A549 (cell line): ENCODE measurements at regions of chr3 and their contacts with region 1.

Region 1: GRCh38 chr3:159884661-159885402 is 103.8 kb upstream of the IL12A start:
- DNase-seq: peak; percentile 44 to 49
- ATAC-seq: peak; percentile 77 to 82; a peak in 4 of 6 replicates
- H3K4me3 ChIP-seq: no peak overlapping the region
- H3K27ac ChIP-seq: peak overlapping the region; percentile 2 to 40; a peak in 4 of 6 replicates
- H3K4me1 ChIP-seq: no peaks in the 10 kb centered on the region
- CTCF ChIP-seq: peak; percentile 80
- EP300 ChIP-seq: no peak
- POLR2A ChIP-seq: no peak
- RAD21 ChIP-seq: peak; percentile 71 to 86

Region 2: DNA sequence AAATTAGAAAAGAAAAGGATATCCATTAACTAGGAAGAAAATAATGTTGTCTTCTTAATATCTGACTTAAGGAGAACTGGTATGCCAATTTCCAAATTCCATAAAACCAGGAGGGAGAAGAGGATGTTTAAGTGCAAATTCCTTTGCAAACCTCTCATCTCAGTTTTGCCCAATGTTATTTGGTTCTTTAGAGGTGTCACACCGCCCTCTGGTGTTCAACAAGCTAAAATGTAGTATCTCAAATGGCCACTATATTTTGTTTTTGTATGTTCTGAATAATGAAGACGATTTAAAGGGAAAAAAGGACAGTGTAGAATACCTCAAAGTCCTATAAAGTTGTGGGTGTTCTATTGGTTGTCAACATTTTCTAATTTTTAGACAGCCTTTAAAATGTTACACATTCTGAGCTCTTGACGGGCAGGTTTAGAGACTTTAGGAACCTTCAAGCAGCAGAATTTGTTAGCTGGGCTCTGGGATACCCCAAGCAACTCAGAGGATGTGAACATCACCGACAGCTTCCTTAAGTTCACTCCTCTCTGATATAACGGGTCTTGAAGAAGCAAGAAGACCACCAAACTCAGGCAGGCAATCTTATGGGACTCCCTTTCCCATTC is 624.7 kb before region 1 on chr3:
- CTCF ChIA-PET with region 1: interaction called, 11 read pairs
- POLR2A ChIA-PET with region 1: no interaction called
- DNase-seq: peak; percentile 19 to 65
- ATAC-seq: peak; percentile 57 to 82; a peak in 4 of 6 replicates
- H3K4me3 ChIP-seq: no peak overlapping the region
- H3K27ac ChIP-seq: no peak overlapping the region
- H3K4me1 ChIP-seq: no peaks in the 10 kb centered on the region
- CTCF ChIP-seq: peak; percentile 86
- EP300 ChIP-seq: no peak
- POLR2A ChIP-seq: no peak
- RAD21 ChIP-seq: peak; percentile 90 to 92

Region 3: GRCh38 chr3:159852821-159853505 is 31.9 kb before region 1 on chr3:
- CTCF ChIA-PET with region 1: interaction called, 15 read pairs
- POLR2A ChIA-PET with region 1: no interaction called
- DNase-seq: peak in 1 of 2 experiments; percentile 10
- ATAC-seq: peak; percentile 49 to 60; a peak in 5 of 6 replicates
- H3K4me3 ChIP-seq: no peak overlapping the region
- H3K27ac ChIP-seq: peak overlapping the region; percentile 51 to 80; a peak in 5 of 6 replicates
- H3K4me1 ChIP-seq: peaks cover 48% of the 10 kb centered on the region
- CTCF ChIP-seq: no peak
- EP300 ChIP-seq: no peak
- POLR2A ChIP-seq: no peak
- RAD21 ChIP-seq: no peak

Region 4: DNA sequence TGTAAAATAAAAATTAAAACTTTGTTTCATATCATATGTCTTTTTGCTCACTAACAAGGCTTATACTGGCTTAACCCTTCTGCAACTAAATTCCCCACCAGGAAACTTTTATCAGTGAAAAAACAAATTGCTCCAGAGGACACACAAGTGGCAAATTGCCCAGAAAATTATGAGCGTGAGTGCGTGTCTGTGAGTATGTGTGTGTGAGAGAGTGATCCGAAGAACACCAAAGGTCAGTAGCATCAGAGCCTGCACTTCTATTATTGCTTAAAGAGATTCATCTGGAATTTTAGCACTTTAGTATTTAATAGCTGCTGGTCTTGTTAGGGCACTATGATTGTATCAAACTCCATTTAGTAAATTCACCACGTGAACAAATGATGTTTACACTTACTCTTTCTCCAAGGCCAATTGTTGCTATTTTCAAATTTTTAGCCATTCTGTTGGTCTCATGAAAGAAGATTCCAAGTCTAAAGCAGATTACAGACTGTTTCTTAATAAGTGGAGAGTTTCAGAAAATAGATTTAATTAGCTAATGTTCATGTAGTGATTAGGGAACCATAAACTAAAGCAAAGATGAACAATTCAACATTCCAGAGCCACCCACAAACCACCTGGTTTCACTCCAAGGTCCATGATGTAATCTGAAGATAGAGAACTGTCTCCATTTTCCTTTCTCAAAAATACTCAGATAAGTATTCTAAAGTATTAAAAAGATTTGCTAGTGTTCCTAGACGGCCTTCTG is 12.7 kb after region 1 on chr3:
- CTCF ChIA-PET with region 1: interaction called, 93 read pairs
- POLR2A ChIA-PET with region 1: no interaction called
- DNase-seq: no peak
- ATAC-seq: no peak
- H3K4me3 ChIP-seq: no peak overlapping the region
- H3K27ac ChIP-seq: no peak overlapping the region
- H3K4me1 ChIP-seq: no peaks in the 10 kb centered on the region
- CTCF ChIP-seq: no peak
- EP300 ChIP-seq: no peak
- POLR2A ChIP-seq: no peak
- RAD21 ChIP-seq: no peak

Region 5: GRCh38 chr3:159929435-159930141 is 44.8 kb after region 1 on chr3:
- CTCF ChIA-PET with region 1: interaction called, 14 read pairs
- POLR2A ChIA-PET with region 1: no interaction called
- DNase-seq: peak; percentile 44 to 66
- ATAC-seq: peak; percentile 58 to 70
- H3K4me3 ChIP-seq: no peak overlapping the region
- H3K27ac ChIP-seq: peak overlapping the region; percentile 70 to 82
- H3K4me1 ChIP-seq: peaks cover 25% of the 10 kb centered on the region
- CTCF ChIP-seq: peak; percentile 17; the same call in 1 of the 3 replicates
- EP300 ChIP-seq: no peak
- POLR2A ChIP-seq: no peak
- RAD21 ChIP-seq: peak; percentile 31 to 45; a peak in 4 of 5 replicates

Region 6: GRCh38 chr3:159978353-159978752 is 93.5 kb after region 1 on chr3:
- CTCF ChIA-PET with region 1: interaction called, 11 read pairs
- POLR2A ChIA-PET with region 1: no interaction called
- DNase-seq: no peak
- ATAC-seq: no peak
- H3K4me3 ChIP-seq: no peak overlapping the region
- H3K27ac ChIP-seq: no peak overlapping the region
- H3K4me1 ChIP-seq: no peaks in the 10 kb centered on the region
- CTCF ChIP-seq: no peak
- EP300 ChIP-seq: no peak
- POLR2A ChIP-seq: no peak
- RAD21 ChIP-seq: no peak

Region 7: GRCh38 chr3:160003520-160004128 is 118.8 kb after region 1 on chr3:
- CTCF ChIA-PET with region 1: interaction called, 450 read pairs
- POLR2A ChIA-PET with region 1: no interaction called
- DNase-seq: peak; percentile 60 to 69
- ATAC-seq: peak; percentile 87 to 95
- H3K4me3 ChIP-seq: no peak overlapping the region
- H3K27ac ChIP-seq: no peak overlapping the region; a peak in 1 of 6 replicates
- H3K4me1 ChIP-seq: no peaks in the 10 kb centered on the region; the same call in 2 of the 3 replicates
- CTCF ChIP-seq: peak; percentile 79
- EP300 ChIP-seq: no peak
- POLR2A ChIP-seq: no peak
- RAD21 ChIP-seq: peak; percentile 76 to 82